Activated CD4-positive, alpha-beta T cell treated with anti-CD3 and anti-CD28 coated beads for 36 hours (primary cell): ENCODE measurements at regions of chr3 and their contacts with region 1.

Region 1: GRCh38 chr3:129278439-129278970 is at the start of gene HMCES:
- DNase-seq: peak; percentile 98
- ATAC-seq: peak; percentile 84
- H3K4me3 Mint-ChIP-seq: peak within 1 kb of the TSS; percentile 89
- H3K27ac Mint-ChIP-seq: peak within 1 kb of the TSS; percentile 95
- H3K4me1 Mint-ChIP-seq: peaks cover 55% of the 10 kb centered on the region
- H3K27me3 Mint-ChIP-seq: no peaks in the 10 kb centered on the region
- total RNA-seq, gene HMCES: 43.1 to 56.7 TPM

Region 2: GRCh38 chr3:129045675-129046036 is 232.8 kb before region 1 on chr3:
- CTCF ChIA-PET with region 1: no interaction called
- POLR2A ChIA-PET with region 1: no interaction called
- intact Hi-C with region 1: no loop called
- DNase-seq: peak; percentile 68
- ATAC-seq: peak; percentile 98
- H3K4me3 Mint-ChIP-seq: no peak overlapping the region
- H3K27ac Mint-ChIP-seq: no peak overlapping the region
- H3K4me1 Mint-ChIP-seq: no peaks in the 10 kb centered on the region
- H3K27me3 Mint-ChIP-seq: peaks cover 13% of the 10 kb centered on the region

Region 3: GRCh38 chr3:129399145-129399894 is 120.8 kb after region 1 on chr3:
- CTCF ChIA-PET with region 1: no interaction called
- POLR2A ChIA-PET with region 1: interaction called, 3 read pairs
- intact Hi-C with region 1: loop called in 1 of 2 experiments (anchors 1 kb)
- DNase-seq: peak; percentile 90
- ATAC-seq: peak; percentile 82
- H3K4me3 Mint-ChIP-seq: peak overlapping the region; percentile 99
- H3K27ac Mint-ChIP-seq: peak overlapping the region; percentile 98
- H3K4me1 Mint-ChIP-seq: peaks cover 29% of the 10 kb centered on the region
- H3K27me3 Mint-ChIP-seq: no peaks in the 10 kb centered on the region

Region 4: GRCh38 chr3:129469026-129469425 is 190.5 kb after region 1 on chr3:
- CTCF ChIA-PET with region 1: no interaction called
- POLR2A ChIA-PET with region 1: no interaction called
- intact Hi-C with region 1: no loop called
- DNase-seq: no peak
- ATAC-seq: no peak
- H3K4me3 Mint-ChIP-seq: no peak overlapping the region
- H3K27ac Mint-ChIP-seq: no peak overlapping the region
- H3K4me1 Mint-ChIP-seq: peaks cover 2% of the 10 kb centered on the region
- H3K27me3 Mint-ChIP-seq: no peaks in the 10 kb centered on the region